ENCODE measurements at regions of chr13 and their contacts with region 1.

Region 1: GRCh38 chr13:31742097-31742734 is 2.9 kb downstream of the RXFP2 start:
- DNase-seq: peak; percentile 89
- H3K4me3 Mint-ChIP-seq: no peak overlapping the region
- H3K27ac Mint-ChIP-seq: no peak overlapping the region
- H3K4me1 Mint-ChIP-seq: peaks cover 2% of the 10 kb centered on the region
- H3K27me3 Mint-ChIP-seq: peaks cover 11% of the 10 kb centered on the region

Region 2: GRCh38 chr13:31236211-31236786 is 505.9 kb before region 1 on chr13:
- intact Hi-C with region 1: loop called (anchors 5 kb)
- DNase-seq: no peak
- H3K4me3 Mint-ChIP-seq: no peak overlapping the region
- H3K27ac Mint-ChIP-seq: no peak overlapping the region
- H3K4me1 Mint-ChIP-seq: no peaks in the 10 kb centered on the region
- H3K27me3 Mint-ChIP-seq: no peaks in the 10 kb centered on the region

Region 3: GRCh38 chr13:31431722-31432137 is 310.5 kb before region 1 on chr13:
- intact Hi-C with region 1: loop called (anchors 1 kb)
- DNase-seq: peak; percentile 83
- H3K4me3 Mint-ChIP-seq: no peak overlapping the region
- H3K27ac Mint-ChIP-seq: no peak overlapping the region
- H3K4me1 Mint-ChIP-seq: no peaks in the 10 kb centered on the region
- H3K27me3 Mint-ChIP-seq: peaks cover 2% of the 10 kb centered on the region